ENCODE measurements at regions of chr19 and their contacts with region 1.

Region 1: DNA sequence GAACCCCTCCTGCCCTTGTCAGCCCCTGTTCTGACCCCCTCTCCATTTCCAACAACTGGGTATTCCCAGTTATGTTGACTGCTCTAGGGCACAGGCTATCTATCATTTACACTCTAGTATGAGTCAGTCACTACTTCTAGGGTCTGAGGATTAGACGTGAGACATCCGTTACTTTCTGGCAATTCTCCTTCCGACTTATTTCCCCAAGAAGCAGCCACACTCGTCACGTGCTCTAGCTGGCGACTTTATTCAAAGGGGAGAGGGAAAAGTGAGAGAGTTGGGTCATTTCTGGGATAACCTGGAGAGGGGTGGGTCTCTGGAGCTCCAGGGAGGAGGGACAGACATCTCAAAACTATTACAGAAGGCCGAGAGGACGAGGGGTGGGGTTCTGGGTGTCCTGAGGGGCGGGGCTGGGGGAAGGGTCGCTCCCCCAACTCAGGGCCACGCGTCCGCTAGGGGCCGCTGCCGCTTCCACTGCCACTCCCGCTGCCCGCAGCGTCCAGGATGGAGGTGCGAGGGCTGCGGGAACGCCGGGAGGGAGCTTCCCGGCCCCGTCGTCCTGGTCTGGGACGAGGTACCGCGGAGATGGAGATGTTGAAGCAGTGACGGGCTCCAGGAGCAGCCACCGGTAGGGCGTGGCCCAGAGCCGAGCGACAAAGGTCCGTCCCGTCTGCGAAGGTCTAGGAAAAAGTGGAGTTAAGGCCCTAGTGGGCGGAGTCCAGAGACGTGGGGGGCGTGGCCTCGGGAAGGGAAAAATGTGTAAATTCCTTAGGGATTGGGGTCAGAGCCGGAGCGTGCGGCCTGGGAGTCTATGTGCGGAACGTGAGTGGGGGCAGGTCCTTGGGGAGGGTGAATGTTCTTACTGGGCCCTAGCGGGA is 8.9 kb downstream of the RTBDN start:
- DNase-seq: no peak
- ATAC-seq: no peak
- H3K4me3 ChIP-seq: no peak overlapping the region
- H3K27ac ChIP-seq: no peak overlapping the region
- H3K4me1 ChIP-seq: no peaks in the 10 kb centered on the region
- H3K27me3 ChIP-seq: no peaks in the 10 kb centered on the region
- CTCF ChIP-seq: no peak; the same call in 1 of the 2 replicates

Region 2: DNA sequence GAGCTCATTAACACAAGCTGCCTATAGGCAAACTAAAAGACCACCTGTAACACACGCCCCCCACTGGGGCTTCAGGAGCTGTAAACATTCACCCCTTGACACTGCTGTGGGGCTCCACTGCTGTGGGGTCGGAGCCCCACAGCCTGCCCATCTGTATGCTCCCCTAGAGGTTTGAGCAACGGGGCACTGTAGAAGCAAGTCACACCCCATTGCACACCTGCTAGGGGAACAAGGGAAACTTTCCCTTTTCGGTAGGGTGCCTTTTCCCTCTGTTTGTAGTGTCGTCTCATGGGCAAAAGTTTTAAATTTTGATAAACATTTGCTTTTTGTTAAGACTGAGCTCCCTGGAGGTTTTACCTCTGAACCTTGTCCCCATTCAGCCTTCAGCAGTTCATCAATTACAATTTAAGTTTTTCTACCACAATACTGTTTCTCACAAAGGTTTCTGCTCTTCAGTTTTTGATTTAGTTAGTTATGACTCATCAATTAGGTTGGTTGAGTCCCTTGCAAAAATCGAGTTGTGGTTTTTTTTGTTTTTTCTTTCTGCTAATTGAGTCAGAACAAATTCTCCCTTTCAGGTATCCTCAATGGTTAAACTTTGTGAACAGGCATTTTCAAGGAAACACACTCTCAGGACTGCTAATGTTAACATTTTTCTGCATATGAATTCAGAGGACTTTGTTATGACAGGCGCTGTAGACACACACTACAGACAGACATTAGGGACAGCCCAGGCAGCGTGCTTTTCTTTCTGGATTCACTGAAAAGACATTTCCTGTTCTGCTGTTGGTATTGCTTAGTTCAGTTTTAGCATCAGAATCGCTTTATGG is 825.1 kb before region 1 on chr19:
- CTCF ChIA-PET with region 1: no interaction called
- POLR2A ChIA-PET with region 1: no interaction called
- in situ Hi-C with region 1: no loop called
- intact Hi-C with region 1: no loop called
- DNase-seq: no peak
- ATAC-seq: no peak
- H3K4me3 ChIP-seq: no peak overlapping the region
- H3K27ac ChIP-seq: no peak overlapping the region
- H3K4me1 ChIP-seq: no peaks in the 10 kb centered on the region
- H3K27me3 ChIP-seq: no peaks in the 10 kb centered on the region
- CTCF ChIP-seq: no peak

Region 3: GRCh38 chr19:12647490-12648071 is 177.9 kb before region 1 on chr19:
- CTCF ChIA-PET with region 1: interaction called, 12 read pairs
- POLR2A ChIA-PET with region 1: no interaction called
- in situ Hi-C with region 1: no loop called
- intact Hi-C with region 1: no loop called
- DNase-seq: no peak
- ATAC-seq: peak; percentile 80
- H3K4me3 ChIP-seq: no peak overlapping the region
- H3K27ac ChIP-seq: no peak overlapping the region
- H3K4me1 ChIP-seq: no peaks in the 10 kb centered on the region
- H3K27me3 ChIP-seq: no peaks in the 10 kb centered on the region
- CTCF ChIP-seq: no peak

Region 4: GRCh38 chr19:12757544-12758274 is 67.8 kb before region 1 on chr19:
- CTCF ChIA-PET with region 1: interaction called, 16 read pairs
- POLR2A ChIA-PET with region 1: no interaction called
- in situ Hi-C with region 1: no loop called
- intact Hi-C with region 1: no loop called
- DNase-seq: no peak
- ATAC-seq: peak; percentile 93
- H3K4me3 ChIP-seq: peak overlapping the region; percentile 44 to 55
- H3K27ac ChIP-seq: peak overlapping the region; percentile 59; the same call in 1 of the 2 replicates
- H3K4me1 ChIP-seq: no peaks in the 10 kb centered on the region
- H3K27me3 ChIP-seq: no peaks in the 10 kb centered on the region
- CTCF ChIP-seq: peak; percentile 96

Region 5: DNA sequence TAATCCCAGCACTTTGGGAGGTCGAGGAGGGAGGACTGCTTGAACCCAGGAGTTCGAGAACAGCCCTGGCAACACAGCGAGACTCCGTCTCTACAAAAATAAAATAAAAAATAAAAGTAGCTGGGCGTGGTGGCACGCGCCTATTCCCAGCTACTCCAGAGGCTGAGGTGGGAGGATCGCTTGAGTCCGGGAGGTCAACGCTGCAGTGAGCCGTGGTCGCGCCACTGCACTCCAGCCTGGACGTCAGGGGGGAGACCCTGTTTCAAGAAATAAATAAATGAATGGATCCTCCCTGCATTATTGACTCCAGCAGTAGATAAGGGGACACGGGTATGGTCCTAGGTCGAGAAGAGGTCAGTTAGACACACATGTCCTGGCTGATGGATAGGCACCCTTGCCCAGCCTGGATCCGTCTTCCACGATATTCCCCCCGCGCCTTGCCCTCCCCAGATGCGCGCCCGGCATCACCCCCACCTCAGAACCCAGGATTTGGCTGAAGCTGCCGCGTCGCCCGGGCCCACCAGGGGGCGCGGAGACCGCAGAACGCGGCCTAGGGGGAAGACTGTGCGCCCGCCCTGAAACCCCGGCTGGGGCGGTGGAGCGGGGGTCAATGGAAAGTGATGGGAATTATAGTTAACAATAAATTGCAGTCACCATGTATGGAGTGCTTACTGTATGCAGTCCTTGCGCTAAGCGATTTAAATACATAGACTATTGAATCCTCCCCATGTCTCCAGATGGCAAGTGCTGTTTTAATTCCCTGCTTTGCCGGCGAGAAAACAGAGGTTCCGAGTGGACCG is 48.1 kb before region 1 on chr19:
- CTCF ChIA-PET with region 1: interaction called, 10 read pairs
- POLR2A ChIA-PET with region 1: interaction called, 3 read pairs
- in situ Hi-C with region 1: no loop called
- intact Hi-C with region 1: no loop called
- DNase-seq: no peak
- ATAC-seq: peak; percentile 73
- H3K4me3 ChIP-seq: peak overlapping the region; percentile 53 to 81
- H3K27ac ChIP-seq: peak overlapping the region; percentile 87
- H3K4me1 ChIP-seq: peaks cover 16% of the 10 kb centered on the region
- H3K27me3 ChIP-seq: no peaks in the 10 kb centered on the region
- CTCF ChIP-seq: peak; percentile 94

Measured in Panc1 (cell line).